ENCODE measurements at regions of chr15 and their contacts with region 1.

Region 1: DNA sequence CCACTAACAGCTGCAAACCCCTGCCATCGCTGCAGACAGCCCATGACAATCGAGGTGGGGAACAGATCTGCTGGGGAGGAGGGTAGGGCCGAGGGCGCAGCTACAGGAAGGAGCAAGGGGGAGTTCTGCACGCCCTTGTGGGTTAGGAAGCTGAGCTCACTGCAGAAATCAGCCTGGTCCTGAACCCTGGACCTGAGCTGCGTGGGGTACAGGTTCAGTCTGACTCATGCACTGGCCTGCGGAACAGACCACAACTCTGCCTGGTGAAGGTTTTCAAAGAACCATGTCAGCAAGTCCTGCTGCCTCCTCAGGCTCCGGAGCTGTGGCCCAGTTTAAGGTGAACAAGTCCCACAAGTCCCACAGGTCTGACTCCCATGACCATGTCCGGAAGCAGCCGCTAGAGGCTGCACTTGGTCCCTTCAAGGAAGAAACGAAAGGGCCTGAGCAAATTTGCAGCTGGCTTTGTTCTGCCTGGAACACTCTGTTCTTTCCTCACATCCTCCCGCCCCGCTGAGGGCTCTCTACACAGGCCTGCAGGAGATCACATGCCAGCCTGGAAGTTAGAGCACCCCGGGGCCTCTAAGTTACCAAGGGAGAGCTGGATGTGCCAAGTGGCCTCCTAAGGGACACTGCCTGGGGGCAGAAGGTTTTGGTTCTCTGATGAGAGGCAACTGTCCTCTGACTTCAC is 49.4 kb upstream of the AKAP13 start:
- DNase-seq: peak; percentile 68
- H3K4me3 Mint-ChIP-seq: peak overlapping the region; percentile 91
- H3K27ac Mint-ChIP-seq: peak overlapping the region; percentile 96
- H3K4me1 Mint-ChIP-seq: peaks cover 48% of the 10 kb centered on the region
- H3K27me3 Mint-ChIP-seq: no peaks in the 10 kb centered on the region

Region 2: DNA sequence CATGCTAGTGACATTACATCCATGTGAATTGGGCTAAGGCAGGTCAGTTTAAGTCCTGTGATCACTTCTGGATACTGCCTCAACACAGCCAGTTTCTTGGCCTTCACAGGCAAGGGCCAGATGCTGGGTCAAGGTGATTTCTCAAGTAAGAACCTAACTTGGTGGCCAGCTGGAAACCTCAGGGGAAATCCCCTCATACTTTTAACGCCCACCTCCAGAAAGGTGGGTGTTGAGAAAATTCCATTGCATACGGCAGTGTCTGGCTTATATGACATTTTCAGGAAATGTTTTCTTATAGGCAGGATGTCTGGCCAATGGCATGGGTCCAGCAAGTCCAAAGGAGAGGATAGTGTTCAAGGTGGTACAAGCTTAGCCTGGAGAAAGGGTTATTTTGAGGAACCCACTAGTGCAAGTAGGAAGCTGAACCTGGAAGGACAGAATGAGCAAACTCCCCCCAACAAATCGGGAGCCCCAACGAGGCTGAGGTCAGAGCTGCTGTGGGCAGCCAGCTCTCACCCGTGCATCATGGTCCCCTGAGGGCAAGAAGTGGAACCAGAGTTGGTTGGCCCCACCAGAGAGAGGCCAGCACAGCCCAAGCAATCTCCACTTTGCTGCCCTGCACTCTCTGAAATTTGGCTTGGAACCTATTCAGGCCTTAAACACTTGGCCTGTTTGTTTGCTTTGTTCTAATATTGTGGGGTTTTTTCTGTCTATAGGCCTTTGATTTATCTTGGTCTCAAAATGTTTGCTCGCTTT is 213.9 kb before region 1 on chr15:
- intact Hi-C with region 1: no loop called
- DNase-seq: no peak
- H3K4me3 Mint-ChIP-seq: no peak overlapping the region
- H3K27ac Mint-ChIP-seq: peak overlapping the region; percentile 70
- H3K4me1 Mint-ChIP-seq: peaks cover 20% of the 10 kb centered on the region
- H3K27me3 Mint-ChIP-seq: no peaks in the 10 kb centered on the region

Region 3: DNA sequence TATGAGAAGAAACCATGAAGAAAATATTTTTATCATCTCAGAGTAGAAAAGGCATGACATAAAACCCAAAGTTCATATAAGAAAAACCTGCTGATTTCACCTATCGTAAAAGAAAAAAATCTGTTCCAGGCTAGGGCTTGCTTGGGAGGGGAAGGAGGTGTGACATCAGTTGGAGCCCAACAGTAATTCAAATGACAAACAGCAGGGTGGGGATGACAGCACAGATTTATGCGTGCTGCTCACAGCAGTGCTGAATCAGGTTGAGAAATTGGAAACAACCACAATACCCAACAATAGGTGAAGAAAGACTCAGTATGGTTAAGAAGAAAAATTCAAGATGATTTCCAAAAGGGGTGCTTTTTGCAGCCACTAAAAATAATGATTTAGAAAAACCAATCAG is 177.0 kb before region 1 on chr15:
- intact Hi-C with region 1: no loop called
- DNase-seq: no peak
- H3K4me3 Mint-ChIP-seq: no peak overlapping the region
- H3K27ac Mint-ChIP-seq: no peak overlapping the region
- H3K4me1 Mint-ChIP-seq: peaks cover 16% of the 10 kb centered on the region
- H3K27me3 Mint-ChIP-seq: peaks cover 17% of the 10 kb centered on the region

Region 4: GRCh38 chr15:85318048-85318731 is 12.9 kb before region 1 on chr15:
- intact Hi-C with region 1: loop called (anchors 1 kb)
- DNase-seq: peak; percentile 55
- H3K4me3 Mint-ChIP-seq: peak overlapping the region; percentile 41
- H3K27ac Mint-ChIP-seq: peak overlapping the region; percentile 91
- H3K4me1 Mint-ChIP-seq: peaks cover 66% of the 10 kb centered on the region
- H3K27me3 Mint-ChIP-seq: no peaks in the 10 kb centered on the region

Region 5: DNA sequence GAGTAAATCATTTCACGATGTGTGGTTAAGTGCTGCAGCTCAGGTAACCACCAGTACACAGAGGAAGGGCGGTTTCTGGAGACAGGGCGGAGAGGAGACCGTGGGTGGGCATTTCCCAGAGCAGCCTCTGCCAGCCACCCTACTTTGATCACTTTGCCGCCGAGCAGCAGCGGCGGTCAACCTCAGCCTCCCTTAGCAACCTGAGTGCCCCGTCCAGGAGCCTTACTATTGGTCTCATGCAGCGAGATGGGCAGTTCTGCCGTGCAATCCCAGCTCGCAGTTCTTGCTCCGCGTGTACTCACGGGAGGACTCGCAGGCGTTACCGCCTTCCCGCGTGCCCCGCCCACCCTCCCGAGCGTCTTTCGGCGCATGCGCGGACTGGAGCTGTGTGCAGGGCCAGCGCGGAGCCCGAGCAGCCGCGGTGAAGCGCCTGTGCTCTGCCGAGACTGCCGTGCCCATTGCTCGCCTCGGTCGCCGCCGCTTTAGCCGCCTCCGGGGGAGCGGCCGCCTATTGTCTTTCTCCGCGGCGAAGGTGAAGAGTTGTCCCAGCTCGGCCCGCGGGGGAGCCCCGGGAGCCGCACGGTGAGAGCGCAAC is 49.3 kb after region 1 on chr15 and contains the start of gene AKAP13:
- intact Hi-C with region 1: loop called (anchors 2 kb)
- DNase-seq: peak; percentile 95
- H3K4me3 Mint-ChIP-seq: peak within 1 kb of the TSS; percentile 88
- H3K27ac Mint-ChIP-seq: peak within 1 kb of the TSS; percentile 86
- H3K4me1 Mint-ChIP-seq: peaks cover 48% of the 10 kb centered on the region
- H3K27me3 Mint-ChIP-seq: peaks cover 6% of the 10 kb centered on the region
- total RNA-seq, gene AKAP13: 92.1 and 107 TPM in 2 replicates

Region 6: DNA sequence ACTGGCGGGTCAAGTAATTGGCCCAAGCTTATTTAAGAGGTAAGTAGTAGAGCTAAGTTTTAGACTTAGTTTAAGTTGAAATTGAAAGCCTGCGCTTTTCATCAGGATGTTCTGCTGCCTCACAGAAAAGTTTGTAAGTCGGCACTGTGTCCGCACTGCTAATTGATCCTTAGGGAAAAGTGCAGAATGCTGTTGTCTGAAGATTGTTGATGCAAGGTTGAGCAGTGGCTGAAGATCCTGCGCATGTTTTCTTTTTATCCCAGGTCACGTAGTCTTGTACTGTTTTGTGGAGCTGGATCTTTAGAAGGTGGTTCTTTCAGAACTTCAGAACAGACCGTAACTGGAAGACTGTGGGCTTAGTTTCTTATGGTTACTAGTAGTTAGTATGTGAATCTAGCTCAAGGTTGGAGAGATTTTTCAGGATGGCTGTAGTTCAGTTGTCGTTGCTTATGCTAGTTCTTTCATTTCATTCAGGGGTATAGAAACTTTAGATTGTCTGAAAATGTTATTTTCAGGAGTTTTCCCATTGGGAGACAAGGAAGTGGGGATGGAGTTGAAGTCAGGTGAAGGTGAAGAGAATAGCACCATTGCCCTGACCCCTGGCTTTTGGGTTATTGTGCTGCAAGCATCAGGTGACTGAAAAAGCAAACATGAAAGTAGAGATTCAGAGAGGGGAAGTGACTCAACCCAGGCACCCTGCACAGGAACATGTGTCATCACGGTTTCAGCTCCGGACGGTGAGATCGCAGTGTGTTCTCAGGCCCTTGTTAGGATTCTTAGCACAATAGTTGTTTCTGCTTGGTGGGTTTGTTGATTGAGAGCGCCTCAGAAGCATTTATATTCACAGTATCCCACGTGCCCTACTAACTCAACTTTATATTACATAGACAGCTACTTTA is 82.2 kb after region 1 on chr15:
- intact Hi-C with region 1: loop called (anchors 1 kb)
- DNase-seq: peak; percentile 71
- H3K4me3 Mint-ChIP-seq: peak overlapping the region; percentile 55
- H3K27ac Mint-ChIP-seq: peak overlapping the region; percentile 87
- H3K4me1 Mint-ChIP-seq: peaks cover 64% of the 10 kb centered on the region
- H3K27me3 Mint-ChIP-seq: no peaks in the 10 kb centered on the region

Region 7: GRCh38 chr15:85646538-85647091 is 315.6 kb after region 1 on chr15:
- intact Hi-C with region 1: loop called (anchors 10 kb)
- DNase-seq: peak; percentile 20
- H3K4me3 Mint-ChIP-seq: peak overlapping the region; percentile 9
- H3K27ac Mint-ChIP-seq: peak overlapping the region; percentile 89
- H3K4me1 Mint-ChIP-seq: peaks cover 42% of the 10 kb centered on the region
- H3K27me3 Mint-ChIP-seq: no peaks in the 10 kb centered on the region

Measured in activated T-helper 2 cell treated with anti-CD3 and anti-CD28 coated beads, Interferon-gamma antibody, Interleukin-2, Interleukin-4, amounts not matched to agents 10 μg/mL and 5 μg/mL and 100 μg/mL, durations not matched to agents 14 hours and 24 hours and 36 hours (primary cell).